ENCODE measurements at regions of chr14 and their contacts with region 1.

Region 1: GRCh38 chr14:24431569-24432258 is 2.0 kb downstream of the KHNYN start:
- DNase-seq: peak; percentile 96
- ATAC-seq: peak; percentile 84
- H3K4me3 Mint-ChIP-seq: peak overlapping the region; percentile 74
- H3K27ac Mint-ChIP-seq: peak overlapping the region; percentile 48
- H3K4me1 Mint-ChIP-seq: peaks cover 29% of the 10 kb centered on the region
- H3K27me3 Mint-ChIP-seq: peaks cover 14% of the 10 kb centered on the region
- CTCF ChIP-seq: peak; percentile 89

Region 2: GRCh38 chr14:24241829-24242443 is 189.8 kb before region 1 on chr14:
- CTCF ChIA-PET with region 1: interaction called, 37 read pairs
- POLR2A ChIA-PET with region 1: interaction called, 5 read pairs
- DNase-seq: peak; percentile 95
- ATAC-seq: peak; percentile 85
- H3K4me3 Mint-ChIP-seq: peak overlapping the region; percentile 93
- H3K27ac Mint-ChIP-seq: peak overlapping the region; percentile 97
- H3K4me1 Mint-ChIP-seq: peaks cover 13% of the 10 kb centered on the region
- H3K27me3 Mint-ChIP-seq: peaks cover 12% of the 10 kb centered on the region
- CTCF ChIP-seq: no peak

Region 3: GRCh38 chr14:24310646-24311604 is 120.8 kb before region 1 on chr14 and contains the start of gene LTB4R:
- CTCF ChIA-PET with region 1: interaction called, 32 read pairs
- POLR2A ChIA-PET with region 1: no interaction called
- DNase-seq: peak; percentile 78
- ATAC-seq: peak; percentile 68
- H3K4me3 Mint-ChIP-seq: peak within 1 kb of the TSS; percentile 47
- H3K27ac Mint-ChIP-seq: no peak within 1 kb of the TSS
- H3K4me1 Mint-ChIP-seq: peaks cover 15% of the 10 kb centered on the region
- H3K27me3 Mint-ChIP-seq: peaks cover 44% of the 10 kb centered on the region
- CTCF ChIP-seq: no peak; the same call in 1 of the 2 replicates
- total RNA-seq, gene LTB4R: 6.9 to 9.4 TPM (median 7.6 TPM) in 3 replicates

Region 4: GRCh38 chr14:24327303-24327702 is 104.4 kb before region 1 on chr14:
- CTCF ChIA-PET with region 1: interaction called, 518 read pairs
- POLR2A ChIA-PET with region 1: interaction called, 7 read pairs
- DNase-seq: no peak
- ATAC-seq: no peak
- H3K4me3 Mint-ChIP-seq: no peak overlapping the region
- H3K27ac Mint-ChIP-seq: no peak overlapping the region
- H3K4me1 Mint-ChIP-seq: peaks cover 4% of the 10 kb centered on the region
- H3K27me3 Mint-ChIP-seq: peaks cover 81% of the 10 kb centered on the region
- CTCF ChIP-seq: no peak

Region 5: DNA sequence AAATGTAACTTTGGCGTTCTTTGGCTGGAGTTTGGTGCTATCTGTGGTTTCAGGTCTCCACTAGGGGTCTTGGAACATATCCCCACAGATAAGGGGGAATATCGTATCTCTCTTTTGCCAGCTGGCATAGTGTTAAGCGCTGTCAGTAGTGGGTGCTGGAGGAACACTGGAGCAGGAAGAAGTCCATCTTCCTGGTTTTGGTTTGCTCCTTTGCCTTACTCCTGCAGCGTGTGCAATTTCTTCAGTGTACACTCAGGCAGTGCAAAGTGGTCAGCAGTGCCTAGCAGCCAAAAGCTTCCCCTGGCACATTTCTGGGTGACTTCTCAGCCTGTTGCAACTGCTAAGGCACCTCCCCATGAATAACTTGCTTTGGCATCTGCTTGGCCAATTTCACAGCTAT is 80.2 kb before region 1 on chr14:
- CTCF ChIA-PET with region 1: interaction called, 63 read pairs
- POLR2A ChIA-PET with region 1: no interaction called
- DNase-seq: no peak
- ATAC-seq: peak; percentile 50
- H3K4me3 Mint-ChIP-seq: no peak overlapping the region
- H3K27ac Mint-ChIP-seq: no peak overlapping the region
- H3K4me1 Mint-ChIP-seq: no peaks in the 10 kb centered on the region
- H3K27me3 Mint-ChIP-seq: peaks cover 84% of the 10 kb centered on the region
- CTCF ChIP-seq: no peak

Region 6: DNA sequence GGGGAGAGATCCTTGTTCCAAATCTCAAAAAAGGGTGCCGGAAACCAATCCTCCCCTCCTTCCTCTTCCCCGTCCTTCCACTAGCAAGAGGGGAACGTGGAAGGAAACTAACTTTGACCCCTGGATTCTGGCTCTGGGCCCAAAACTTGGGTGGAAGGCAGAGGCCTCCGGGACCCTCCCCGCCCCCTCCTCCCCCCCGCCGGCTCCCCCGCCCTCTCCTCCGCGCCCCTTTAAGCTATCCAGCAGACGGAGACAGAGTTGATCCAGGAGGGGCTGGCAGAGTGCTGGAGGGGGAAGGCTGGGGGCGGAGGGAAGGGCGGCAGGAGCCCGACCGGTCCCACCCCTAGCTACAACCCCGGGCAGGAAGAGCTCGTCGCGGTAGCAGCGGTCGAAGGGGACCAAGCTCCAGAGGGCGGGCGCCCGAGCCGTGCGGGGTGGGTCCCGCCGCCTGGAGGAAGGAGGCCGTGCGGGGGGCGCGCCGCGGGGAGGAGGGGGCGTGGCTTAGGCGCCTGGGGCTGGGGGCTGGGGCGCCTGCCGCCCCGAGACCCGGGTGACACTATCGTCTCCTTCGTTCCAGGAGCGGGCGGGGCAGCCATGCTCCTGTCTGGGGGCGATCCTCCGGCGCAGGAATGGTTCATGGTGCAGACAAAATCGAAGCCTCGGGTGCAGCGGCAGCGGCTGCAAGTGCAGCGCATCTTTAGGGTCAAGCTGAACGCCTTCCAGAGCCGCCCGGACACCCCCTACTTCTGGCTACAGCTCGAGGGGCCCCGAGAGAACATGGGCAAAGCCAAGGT is 32.9 kb before region 1 on chr14 and contains the start of gene NYNRIN:
- CTCF ChIA-PET with region 1: interaction called, 66 read pairs
- POLR2A ChIA-PET with region 1: no interaction called
- DNase-seq: peak; percentile 70
- ATAC-seq: peak; percentile 83
- H3K4me3 Mint-ChIP-seq: peak within 1 kb of the TSS; percentile 83
- H3K27ac Mint-ChIP-seq: no peak within 1 kb of the TSS
- H3K4me1 Mint-ChIP-seq: peaks cover 53% of the 10 kb centered on the region
- H3K27me3 Mint-ChIP-seq: peaks cover 14% of the 10 kb centered on the region
- CTCF ChIP-seq: no peak
- total RNA-seq, gene NYNRIN: 16.6 to 18.3 TPM (median 17.9 TPM) in 3 replicates

Region 7: DNA sequence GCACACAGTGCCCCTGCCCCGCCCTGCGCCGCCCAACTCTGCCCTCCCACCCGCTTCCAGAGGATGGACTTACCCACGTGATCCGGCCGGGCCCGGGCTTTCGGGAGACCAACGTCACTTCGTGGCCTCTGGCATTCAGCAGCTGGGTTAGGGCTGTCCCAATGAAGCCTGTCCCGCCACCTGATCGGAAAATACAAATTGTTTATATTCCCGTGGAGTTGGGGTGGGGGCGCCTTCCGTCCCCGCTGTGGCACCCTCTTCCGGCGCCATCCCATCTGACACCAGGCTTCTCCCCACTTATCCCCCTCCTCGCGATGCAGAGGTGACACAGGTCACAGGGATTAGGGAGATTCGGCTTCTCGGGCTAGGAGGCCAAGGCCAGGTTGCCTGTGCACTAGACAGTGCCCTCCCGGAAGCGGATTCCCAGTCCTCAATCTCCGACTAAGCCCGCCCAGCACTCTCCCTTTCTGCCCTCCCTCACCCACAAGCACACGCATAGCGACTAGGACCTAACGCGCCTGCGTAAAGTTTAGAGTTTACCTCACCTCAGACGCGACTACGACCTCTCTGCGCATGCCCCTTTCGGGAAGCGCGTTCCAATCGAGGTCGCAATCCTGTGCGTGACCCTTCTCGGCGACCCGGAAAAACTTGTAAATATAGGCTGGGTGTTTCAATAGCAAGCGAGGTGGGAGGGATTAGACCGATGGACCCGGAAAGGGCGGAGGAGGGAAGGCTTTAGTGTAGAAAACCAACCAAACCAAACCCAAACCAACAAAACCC is 10.7 kb after region 1 on chr14 and contains the start of gene SDR39U1:
- CTCF ChIA-PET with region 1: interaction called, 60 read pairs
- POLR2A ChIA-PET with region 1: interaction called, 15 read pairs
- DNase-seq: peak; percentile 93
- ATAC-seq: peak; percentile 92
- H3K4me3 Mint-ChIP-seq: peak within 1 kb of the TSS; percentile 88
- H3K27ac Mint-ChIP-seq: peak within 1 kb of the TSS; percentile 99
- H3K4me1 Mint-ChIP-seq: peaks cover 10% of the 10 kb centered on the region
- H3K27me3 Mint-ChIP-seq: no peaks in the 10 kb centered on the region
- CTCF ChIP-seq: no peak
- total RNA-seq, gene SDR39U1: 55.0 to 59.2 TPM (median 56.7 TPM) in 3 replicates

Region 8: GRCh38 chr14:24508155-24508840 is 76.6 kb after region 1 on chr14 and contains the start of gene CMA1:
- CTCF ChIA-PET with region 1: no interaction called
- POLR2A ChIA-PET with region 1: no interaction called
- DNase-seq: no peak
- ATAC-seq: no peak
- H3K4me3 Mint-ChIP-seq: no peak within 1 kb of the TSS
- H3K27ac Mint-ChIP-seq: no peak within 1 kb of the TSS
- H3K4me1 Mint-ChIP-seq: peaks cover 7% of the 10 kb centered on the region
- H3K27me3 Mint-ChIP-seq: peaks cover 29% of the 10 kb centered on the region
- CTCF ChIP-seq: no peak
- total RNA-seq, gene CMA1: not detected in 3 replicates

Region 9: GRCh38 chr14:24565766-24566165 is 134.1 kb after region 1 on chr14:
- CTCF ChIA-PET with region 1: no interaction called
- POLR2A ChIA-PET with region 1: no interaction called
- DNase-seq: no peak
- ATAC-seq: no peak
- H3K4me3 Mint-ChIP-seq: no peak overlapping the region
- H3K27ac Mint-ChIP-seq: no peak overlapping the region
- H3K4me1 Mint-ChIP-seq: no peaks in the 10 kb centered on the region
- H3K27me3 Mint-ChIP-seq: peaks cover 11% of the 10 kb centered on the region
- CTCF ChIP-seq: no peak

Measured in WTC11 (cell line).